ENCODE measurements at regions of chr5 and their contacts with region 1.

Region 1: DNA sequence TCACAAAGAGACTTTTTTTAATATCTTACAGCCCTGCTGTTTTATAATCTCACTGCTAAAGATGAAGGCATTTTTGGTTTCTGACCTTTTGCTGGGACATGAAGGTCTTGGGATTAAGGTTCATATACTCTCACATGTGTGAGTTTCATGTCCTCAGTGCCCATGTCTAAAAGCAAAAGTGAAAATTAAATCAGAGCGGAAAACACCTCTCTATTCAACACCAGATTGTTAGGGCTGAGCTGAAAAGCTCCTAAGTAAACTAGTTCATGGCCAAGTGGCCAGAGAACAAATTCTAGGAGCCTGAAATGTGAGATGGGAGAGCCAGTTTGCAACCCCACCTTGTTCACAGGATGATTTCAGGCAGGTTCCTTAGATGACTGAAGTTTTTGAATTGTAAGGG is 110.9 kb downstream of the GRIA1 start:
- DNase-seq: peak; percentile 74
- H3K4me3 ChIP-seq: peak overlapping the region; percentile 26
- H3K27ac ChIP-seq: peak overlapping the region; percentile 91
- H3K4me1 ChIP-seq: peaks cover 72% of the 10 kb centered on the region
- CTCF ChIP-seq: no peak

Region 2: DNA sequence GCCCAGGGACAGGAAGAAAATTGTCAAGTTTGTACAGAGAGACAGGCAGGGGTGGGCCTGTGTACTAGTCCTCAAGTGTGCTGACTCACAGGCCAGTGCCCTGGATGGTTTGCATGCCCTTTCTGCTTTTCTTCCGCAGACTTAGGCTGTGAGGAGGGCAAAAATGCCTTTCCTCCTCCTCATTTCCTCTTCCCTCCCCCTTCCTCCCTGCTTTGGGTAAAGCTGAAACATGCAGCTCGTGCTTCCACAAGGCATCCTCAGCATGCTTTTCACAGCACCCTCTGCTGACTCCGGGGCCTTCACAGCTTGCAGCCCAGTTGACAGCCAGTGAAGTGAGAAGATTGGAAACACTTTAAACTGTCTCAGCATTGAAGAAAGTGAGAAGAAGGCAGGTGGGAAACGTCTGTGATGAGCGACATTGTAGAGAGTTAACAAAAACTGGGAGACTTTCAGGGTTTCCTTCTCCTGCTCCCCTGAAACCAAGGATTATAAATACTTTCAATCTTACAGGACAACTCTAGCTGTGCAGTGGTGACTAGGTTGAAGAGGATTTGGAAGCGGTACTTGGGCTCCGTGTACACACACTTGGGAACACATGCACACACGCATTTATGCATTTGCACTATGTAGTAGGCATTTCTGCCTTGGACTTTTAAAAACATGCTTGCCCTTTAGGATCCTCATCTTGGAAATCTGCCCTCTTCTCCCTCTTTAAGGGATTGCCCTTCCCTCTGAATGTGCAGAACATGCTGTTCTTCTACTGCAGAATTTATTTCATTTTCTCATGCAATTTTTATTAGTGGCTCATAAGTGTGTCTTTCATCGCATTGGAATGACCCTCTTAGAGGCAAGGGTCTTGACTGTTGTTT is 27.9 kb after region 1 on chr5:
- CTCF ChIA-PET with region 1: interaction called, 8 read pairs
- POLR2A ChIA-PET with region 1: interaction called, 10 read pairs
- intact Hi-C with region 1: loop called (anchors 2 kb)
- DNase-seq: peak; percentile 72
- H3K4me3 ChIP-seq: no peak overlapping the region
- H3K27ac ChIP-seq: peak overlapping the region; percentile 28
- H3K4me1 ChIP-seq: peaks cover 69% of the 10 kb centered on the region
- CTCF ChIP-seq: peak; percentile 69